GM12878 (cell line): ENCODE measurements at regions of chr15 and their contacts with region 1.

Region 1: GRCh38 chr15:92924216-92924615 is 24.1 kb downstream of the CHD2 start:
- DNase-seq: no peak
- ATAC-seq: no peak
- H3K4me3 ChIP-seq: no peak overlapping the region
- H3K27ac ChIP-seq: no peak overlapping the region
- H3K4me1 ChIP-seq: peaks cover 31% of the 10 kb centered on the region
- H3K27me3 ChIP-seq: no peaks in the 10 kb centered on the region
- CTCF ChIP-seq: no peak
- EP300 ChIP-seq: no peak
- POLR2A ChIP-seq: no peak
- RAD21 ChIP-seq: no peak

Region 2: DNA sequence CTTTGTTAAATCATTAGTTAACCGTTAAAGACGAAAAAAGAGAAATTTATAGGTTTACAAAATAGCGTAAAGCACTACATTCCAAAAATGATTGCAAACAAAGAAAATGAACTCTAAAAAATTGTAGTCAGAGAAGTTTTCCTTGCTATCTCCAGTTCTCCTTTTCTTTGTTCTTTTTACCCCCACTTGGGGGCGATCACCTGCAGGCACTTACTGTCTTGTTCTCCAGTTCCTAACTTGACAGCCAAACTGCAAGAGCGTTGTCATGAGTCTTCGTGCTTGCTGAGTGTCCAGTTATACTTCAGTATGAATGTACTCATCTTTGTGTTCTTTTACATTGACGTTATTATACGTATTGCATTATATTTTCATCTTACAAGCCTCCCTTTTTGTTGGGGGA is 30.4 kb after region 1 on chr15:
- CTCF ChIA-PET with region 1: interaction called, 12 read pairs
- POLR2A ChIA-PET with region 1: no interaction called
- RAD21 ChIA-PET with region 1: no interaction called
- SMC1A ChIA-PET with region 1: interaction called, 4 read pairs
- in situ Hi-C with region 1: no loop called
- intact Hi-C with region 1: no loop called
- DNase-seq: no peak
- ATAC-seq: peak; percentile 50; the same call in 1 of the 3 replicates
- H3K4me3 ChIP-seq: no peak overlapping the region
- H3K27ac ChIP-seq: no peak overlapping the region
- H3K4me1 ChIP-seq: no peaks in the 10 kb centered on the region
- H3K27me3 ChIP-seq: no peaks in the 10 kb centered on the region
- CTCF ChIP-seq: peak; percentile 11 to 40 (median 33); a peak in 4 of 6 replicates
- EP300 ChIP-seq: no peak
- POLR2A ChIP-seq: no peak
- RAD21 ChIP-seq: no peak

Region 3: GRCh38 chr15:93091465-93091864 is 167.2 kb after region 1 on chr15:
- CTCF ChIA-PET with region 1: no interaction called
- POLR2A ChIA-PET with region 1: no interaction called
- RAD21 ChIA-PET with region 1: no interaction called
- SMC1A ChIA-PET with region 1: no interaction called
- in situ Hi-C with region 1: no loop called
- intact Hi-C with region 1: no loop called
- DNase-seq: no peak
- ATAC-seq: no peak
- H3K4me3 ChIP-seq: no peak overlapping the region
- H3K27ac ChIP-seq: no peak overlapping the region
- H3K4me1 ChIP-seq: no peaks in the 10 kb centered on the region; the same call in 1 of the 2 replicates
- H3K27me3 ChIP-seq: peaks cover 8 to 11% of the 10 kb centered on the region in 2 experiments
- CTCF ChIP-seq: no peak
- EP300 ChIP-seq: no peak
- POLR2A ChIP-seq: no peak
- RAD21 ChIP-seq: no peak